B cell (primary cell): ENCODE measurements at regions of chr15 and their contacts with region 1.

Region 1: DNA sequence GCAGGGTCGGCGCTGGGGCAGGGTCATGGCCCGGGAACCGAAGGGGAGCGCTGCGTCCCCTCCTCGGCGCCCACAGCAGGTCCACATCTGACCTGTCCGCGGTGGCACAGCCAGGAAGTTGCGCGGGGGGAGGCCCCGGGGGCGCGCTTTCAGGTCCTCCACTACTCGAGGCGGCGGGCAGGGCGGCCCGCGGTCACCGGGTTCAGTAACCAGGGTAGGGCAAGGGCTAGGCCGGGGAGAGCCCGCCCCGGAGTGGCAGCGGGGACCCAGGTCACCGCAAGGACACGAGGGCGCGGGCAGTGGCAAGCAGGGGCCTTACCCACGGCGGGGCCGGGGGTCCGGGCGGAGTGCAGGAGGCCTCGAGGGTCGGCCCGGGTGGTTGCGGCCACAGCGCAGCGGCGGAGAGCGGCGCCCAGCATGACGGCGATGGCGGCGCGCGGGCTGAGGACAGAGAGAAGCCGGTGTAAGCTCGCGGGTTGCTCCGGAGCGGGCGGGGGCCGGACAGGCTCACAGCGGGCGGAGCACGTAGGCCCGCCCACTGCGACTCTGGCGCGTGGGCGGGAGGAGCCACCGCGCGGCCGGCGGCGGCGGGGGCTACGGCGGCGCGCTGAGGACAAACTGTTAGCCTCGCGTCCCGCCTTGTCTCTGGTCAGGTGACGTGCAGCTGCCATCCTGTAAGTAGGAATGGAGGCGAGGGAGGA is at the start of gene COX5A:
- DNase-seq: peak; percentile 97
- ATAC-seq: peak; percentile 95
- H3K4me3 ChIP-seq: peak within 1 kb of the TSS; percentile 81 to 92 (median 85)
- H3K4me3 Mint-ChIP-seq: peak within 1 kb of the TSS; percentile 97
- H3K27ac ChIP-seq: peak within 1 kb of the TSS; percentile 67 to 89
- H3K27ac Mint-ChIP-seq: peak within 1 kb of the TSS; percentile 95
- H3K4me1 ChIP-seq: peaks cover 9 to 13% of the 10 kb centered on the region in 2 donors
- H3K4me1 Mint-ChIP-seq: peaks cover 24% of the 10 kb centered on the region
- H3K27me3 ChIP-seq: no peaks in the 10 kb centered on the region
- H3K27me3 Mint-ChIP-seq: no peaks in the 10 kb centered on the region
- CTCF ChIP-seq: no peak
- total RNA-seq, gene COX5A: 53.3 and 63.9 TPM in 2 replicates

Region 2: GRCh38 chr15:74615508-74616365 is 322.0 kb before region 1 on chr15 and contains the start of gene CLK3:
- CTCF ChIA-PET with region 1: no interaction called
- POLR2A ChIA-PET with region 1: no interaction called
- intact Hi-C with region 1: loop called (anchors 1 kb)
- DNase-seq: peak; percentile 96
- ATAC-seq: peak; percentile 80
- H3K4me3 ChIP-seq: peak within 1 kb of the TSS; percentile 50 to 100 (median 100)
- H3K4me3 Mint-ChIP-seq: peak within 1 kb of the TSS; percentile 92
- H3K27ac ChIP-seq: peak within 1 kb of the TSS; percentile 99
- H3K27ac Mint-ChIP-seq: peak within 1 kb of the TSS; percentile 97
- H3K4me1 ChIP-seq: peaks cover 18 to 39% of the 10 kb centered on the region in 2 donors
- H3K4me1 Mint-ChIP-seq: peaks cover 37% of the 10 kb centered on the region
- H3K27me3 ChIP-seq: no peaks in the 10 kb centered on the region
- H3K27me3 Mint-ChIP-seq: no peaks in the 10 kb centered on the region
- CTCF ChIP-seq: no peak
- total RNA-seq, gene CLK3: 164 and 176 TPM in 2 replicates

Region 3: GRCh38 chr15:74889883-74890664 is 47.7 kb before region 1 on chr15 and contains the start of gene MPI:
- CTCF ChIA-PET with region 1: no interaction called
- POLR2A ChIA-PET with region 1: no interaction called
- intact Hi-C with region 1: loop called (anchors 5 kb)
- DNase-seq: peak; percentile 87
- ATAC-seq: peak; percentile 99
- H3K4me3 ChIP-seq: peak within 1 kb of the TSS; percentile 53 to 94 (median 87)
- H3K4me3 Mint-ChIP-seq: peak within 1 kb of the TSS; percentile 93
- H3K27ac ChIP-seq: peak within 1 kb of the TSS; percentile 74 to 77
- H3K27ac Mint-ChIP-seq: peak within 1 kb of the TSS; percentile 74
- H3K4me1 ChIP-seq: peaks cover 25 to 38% of the 10 kb centered on the region in 2 donors
- H3K4me1 Mint-ChIP-seq: peaks cover 39% of the 10 kb centered on the region
- H3K27me3 ChIP-seq: no peaks in the 10 kb centered on the region
- H3K27me3 Mint-ChIP-seq: no peaks in the 10 kb centered on the region
- CTCF ChIP-seq: no peak
- total RNA-seq, gene MPI: 37.2 and 41.3 TPM in 2 replicates

Region 4: DNA sequence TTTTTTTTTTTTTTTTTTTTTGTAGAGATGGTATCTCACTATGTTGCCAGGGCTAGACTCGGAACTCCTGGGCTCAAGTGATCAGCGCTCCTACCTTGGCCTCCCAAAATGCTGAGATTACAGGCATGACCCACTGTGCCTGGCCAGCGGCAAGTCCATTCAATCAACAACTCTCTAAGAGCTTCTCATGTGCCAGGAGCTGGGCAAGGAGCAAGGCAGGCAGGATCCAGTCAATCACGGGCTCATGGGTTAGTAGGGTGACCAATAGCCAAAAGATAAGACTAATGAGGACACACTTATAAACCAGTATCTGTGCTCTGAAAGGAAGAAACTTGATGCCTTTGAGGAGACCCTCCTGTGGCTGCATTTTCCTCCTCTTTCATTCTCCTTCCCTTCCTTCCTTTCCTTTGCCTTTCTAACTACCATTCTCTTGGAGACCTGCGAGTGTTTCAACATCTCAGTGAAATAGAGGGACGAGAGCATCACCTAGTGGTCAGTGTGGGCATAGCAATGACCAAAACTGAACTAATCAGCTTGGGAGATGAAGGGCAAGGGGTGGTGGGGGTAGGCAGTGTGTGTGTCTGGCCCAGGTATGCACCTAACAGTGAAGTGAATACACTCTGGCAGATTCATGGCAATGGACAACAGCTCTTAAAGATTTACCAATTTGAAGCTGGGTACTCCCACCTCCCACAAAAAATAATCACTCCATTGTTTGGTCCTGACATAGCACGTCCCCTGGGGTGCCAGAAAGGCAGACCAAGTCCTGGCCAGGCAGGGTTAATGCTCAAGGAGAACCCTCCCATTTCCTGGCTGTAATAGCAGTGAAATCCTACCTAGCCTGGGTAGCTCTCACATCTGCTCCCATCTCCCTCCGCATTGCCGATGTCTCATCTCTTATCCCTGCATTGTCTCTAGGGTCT is 12.6 kb after region 1 on chr15:
- CTCF ChIA-PET with region 1: interaction called, 16 read pairs
- POLR2A ChIA-PET with region 1: interaction called, 3 read pairs
- intact Hi-C with region 1: no loop called
- DNase-seq: peak; percentile 86
- ATAC-seq: peak; percentile 95
- H3K4me3 ChIP-seq: no peak overlapping the region
- H3K4me3 Mint-ChIP-seq: no peak overlapping the region
- H3K27ac ChIP-seq: no peak overlapping the region
- H3K27ac Mint-ChIP-seq: no peak overlapping the region
- H3K4me1 ChIP-seq: peaks cover 6 to 8% of the 10 kb centered on the region in 2 donors
- H3K4me1 Mint-ChIP-seq: peaks cover 7% of the 10 kb centered on the region
- H3K27me3 ChIP-seq: peaks cover 0 to 22% (median 2%) of the 10 kb centered on the region in 4 experiments
- H3K27me3 Mint-ChIP-seq: peaks cover 7% of the 10 kb centered on the region
- CTCF ChIP-seq: peak; percentile 97

Region 5: DNA sequence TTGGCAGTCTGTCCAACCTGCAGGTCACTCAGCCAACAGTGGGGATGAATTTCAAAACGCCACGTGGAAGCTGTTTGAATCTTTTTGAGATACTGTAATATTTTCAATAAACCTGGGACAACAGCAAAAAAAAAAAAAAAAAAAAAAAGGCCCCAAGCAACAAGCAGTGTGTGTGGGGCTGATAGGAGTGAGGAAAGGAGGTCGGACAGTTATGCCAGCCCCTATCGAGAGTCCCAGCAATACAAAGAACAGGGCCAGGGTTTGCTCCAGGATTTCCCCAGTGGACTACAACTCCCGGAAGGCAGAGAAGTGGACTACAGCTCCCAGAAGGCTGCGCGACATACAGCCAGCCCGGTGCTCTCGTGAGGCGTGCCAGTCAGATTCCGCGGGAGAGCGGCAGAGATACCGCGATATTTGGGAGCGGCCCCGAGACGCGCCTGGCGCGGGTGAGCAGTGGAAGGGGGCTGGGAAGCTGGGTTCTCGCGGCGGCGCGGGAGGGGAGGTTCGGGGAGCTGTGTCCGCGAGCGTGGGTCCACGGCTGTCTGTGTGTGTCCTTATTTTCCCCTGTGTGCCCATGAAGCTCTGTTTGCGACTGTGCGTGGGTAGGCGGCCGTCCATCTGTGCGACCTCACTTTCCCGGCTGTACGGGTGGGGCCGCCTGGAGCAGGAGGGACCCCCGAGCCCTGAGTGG is 85.6 kb after region 1 on chr15 and contains the start of gene PPCDC:
- CTCF ChIA-PET with region 1: no interaction called
- POLR2A ChIA-PET with region 1: interaction called, 6 read pairs
- intact Hi-C with region 1: loop called (anchors 1 kb)
- DNase-seq: peak; percentile 93
- ATAC-seq: peak; percentile 100
- H3K4me3 ChIP-seq: peak within 1 kb of the TSS; percentile 72 to 96 (median 94)
- H3K4me3 Mint-ChIP-seq: peak within 1 kb of the TSS; percentile 97
- H3K27ac ChIP-seq: peak within 1 kb of the TSS; percentile 49 to 72
- H3K27ac Mint-ChIP-seq: peak within 1 kb of the TSS; percentile 94
- H3K4me1 ChIP-seq: peaks cover 5 to 18% of the 10 kb centered on the region in 2 donors
- H3K4me1 Mint-ChIP-seq: peaks cover 14% of the 10 kb centered on the region
- H3K27me3 ChIP-seq: peaks cover 0 to 33% (median 15%) of the 10 kb centered on the region in 4 experiments
- H3K27me3 Mint-ChIP-seq: peaks cover 23% of the 10 kb centered on the region
- CTCF ChIP-seq: no peak
- total RNA-seq, gene PPCDC: 14.8 and 15.1 TPM in 2 replicates

Region 6: DNA sequence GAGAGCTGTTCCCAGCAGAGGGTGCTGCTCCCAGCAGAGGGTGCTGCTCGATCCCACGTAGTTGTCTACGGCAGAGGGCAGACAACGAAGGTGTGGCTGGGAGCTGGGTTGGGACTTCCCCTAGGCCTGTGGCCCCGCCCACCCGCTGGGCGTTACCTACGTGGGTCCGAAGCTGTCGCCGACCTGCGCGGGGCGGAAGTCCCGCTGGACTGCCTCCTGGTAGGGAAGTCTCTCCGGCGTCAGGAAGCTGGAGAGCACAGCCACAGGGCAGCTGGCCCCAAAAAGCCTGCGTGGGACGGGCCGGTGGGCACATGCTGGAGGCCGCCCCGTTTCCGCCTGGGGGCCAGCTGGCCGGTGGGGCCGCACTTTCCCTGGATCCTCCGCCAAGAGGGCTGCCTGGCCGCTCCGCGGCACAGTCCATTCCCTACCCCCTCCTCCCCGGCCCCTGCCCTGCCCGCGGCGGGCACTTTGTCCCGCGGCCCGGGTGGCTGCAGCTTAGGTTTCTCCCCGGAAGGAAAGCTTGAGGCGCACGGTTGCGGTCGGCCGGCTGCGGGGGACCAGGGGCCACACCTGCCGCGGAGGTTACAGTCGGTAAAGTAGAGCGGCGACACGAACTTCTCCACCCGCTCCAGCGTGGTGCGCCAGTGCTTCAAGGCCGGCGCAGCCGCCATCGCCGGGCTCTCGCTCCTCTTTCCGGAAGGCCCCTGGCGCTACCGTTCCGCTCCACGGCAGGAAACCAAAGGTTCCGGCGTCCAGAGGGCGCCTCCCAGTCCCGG is 430.4 kb after region 1 on chr15 and contains the start of gene MAN2C1:
- CTCF ChIA-PET with region 1: no interaction called
- POLR2A ChIA-PET with region 1: no interaction called
- intact Hi-C with region 1: loop called (anchors 5 kb)
- DNase-seq: peak; percentile 97
- ATAC-seq: peak; percentile 92
- H3K4me3 ChIP-seq: peak within 1 kb of the TSS; percentile 74 to 96 (median 87)
- H3K4me3 Mint-ChIP-seq: peak within 1 kb of the TSS; percentile 93
- H3K27ac ChIP-seq: peak within 1 kb of the TSS; percentile 98 to 99
- H3K27ac Mint-ChIP-seq: peak within 1 kb of the TSS; percentile 95
- H3K4me1 ChIP-seq: peaks cover 13 to 19% of the 10 kb centered on the region in 2 donors
- H3K4me1 Mint-ChIP-seq: peaks cover 27% of the 10 kb centered on the region
- H3K27me3 ChIP-seq: no peaks in the 10 kb centered on the region
- H3K27me3 Mint-ChIP-seq: no peaks in the 10 kb centered on the region
- CTCF ChIP-seq: peak; percentile 74
- total RNA-seq, gene MAN2C1: 227 and 229 TPM in 2 replicates